Activated CD4-positive, alpha-beta memory T cell treated with anti-CD3 and anti-CD28 coated beads for 36 hours (primary cell): ENCODE measurements at regions of chr6 and their contacts with region 1.

Region 1: DNA sequence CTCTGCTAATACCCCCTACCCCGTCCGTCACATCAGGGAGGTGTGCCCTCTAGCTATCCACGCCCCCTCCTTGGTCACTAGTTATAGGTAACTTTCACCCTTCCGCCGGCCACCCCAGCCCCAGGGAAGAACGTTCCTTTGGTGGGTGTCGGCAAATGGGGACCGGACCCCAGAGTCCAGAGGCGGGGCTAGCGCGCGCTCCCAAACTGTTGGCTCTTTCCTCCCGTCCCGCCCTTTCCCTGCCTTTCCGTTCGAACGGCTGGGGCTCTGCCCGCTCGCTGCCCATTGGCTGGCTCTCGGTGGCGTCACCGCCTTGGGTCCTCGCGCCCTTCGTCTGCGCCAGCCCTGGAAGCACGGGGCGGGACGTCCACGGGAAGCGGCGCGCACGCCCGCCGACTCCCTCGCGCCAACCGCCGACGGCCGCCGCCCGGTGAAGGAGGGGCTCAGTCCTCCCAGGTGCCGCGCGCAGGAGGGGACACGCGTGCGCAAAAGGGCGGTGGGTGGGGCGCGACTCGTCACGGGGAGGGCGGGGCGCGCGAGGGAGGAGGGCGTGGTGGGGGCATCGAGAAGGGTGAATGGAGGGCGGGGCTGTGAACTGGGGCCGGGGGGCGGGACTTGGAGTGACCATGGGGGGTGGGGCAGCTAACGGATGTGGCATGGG is 634 bp upstream of the PHF1 start:
- DNase-seq: peak; percentile 98
- H3K4me3 Mint-ChIP-seq: peak overlapping the region; percentile 84
- H3K27ac Mint-ChIP-seq: peak overlapping the region; percentile 91
- H3K4me1 Mint-ChIP-seq: peaks cover 45% of the 10 kb centered on the region
- H3K27me3 Mint-ChIP-seq: no peaks in the 10 kb centered on the region

Region 2: DNA sequence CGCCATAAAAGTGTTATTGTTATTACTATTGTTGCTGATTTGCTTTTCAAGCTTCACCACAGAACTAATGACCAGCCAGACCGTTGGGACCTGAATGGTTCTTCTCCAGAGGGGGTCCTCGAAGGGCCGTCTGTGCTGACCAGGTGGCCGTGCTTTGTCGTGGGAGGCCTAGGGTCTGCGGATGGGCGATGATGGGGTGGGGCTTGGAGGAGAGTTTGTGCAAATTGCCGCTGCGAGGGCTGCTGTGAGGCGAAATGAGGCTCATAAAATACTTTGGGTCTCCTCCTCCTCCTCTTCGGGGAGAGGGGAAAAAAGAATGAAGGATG is 86.6 kb before region 1 on chr6:
- CTCF ChIA-PET with region 1: interaction called, 3 read pairs
- POLR2A ChIA-PET with region 1: interaction called, 3 read pairs
- intact Hi-C with region 1: loop called (anchors 1 kb)
- DNase-seq: no peak
- H3K4me3 Mint-ChIP-seq: peak overlapping the region; percentile 89
- H3K27ac Mint-ChIP-seq: peak overlapping the region; percentile 98
- H3K4me1 Mint-ChIP-seq: peaks cover 47% of the 10 kb centered on the region
- H3K27me3 Mint-ChIP-seq: no peaks in the 10 kb centered on the region

Region 3: DNA sequence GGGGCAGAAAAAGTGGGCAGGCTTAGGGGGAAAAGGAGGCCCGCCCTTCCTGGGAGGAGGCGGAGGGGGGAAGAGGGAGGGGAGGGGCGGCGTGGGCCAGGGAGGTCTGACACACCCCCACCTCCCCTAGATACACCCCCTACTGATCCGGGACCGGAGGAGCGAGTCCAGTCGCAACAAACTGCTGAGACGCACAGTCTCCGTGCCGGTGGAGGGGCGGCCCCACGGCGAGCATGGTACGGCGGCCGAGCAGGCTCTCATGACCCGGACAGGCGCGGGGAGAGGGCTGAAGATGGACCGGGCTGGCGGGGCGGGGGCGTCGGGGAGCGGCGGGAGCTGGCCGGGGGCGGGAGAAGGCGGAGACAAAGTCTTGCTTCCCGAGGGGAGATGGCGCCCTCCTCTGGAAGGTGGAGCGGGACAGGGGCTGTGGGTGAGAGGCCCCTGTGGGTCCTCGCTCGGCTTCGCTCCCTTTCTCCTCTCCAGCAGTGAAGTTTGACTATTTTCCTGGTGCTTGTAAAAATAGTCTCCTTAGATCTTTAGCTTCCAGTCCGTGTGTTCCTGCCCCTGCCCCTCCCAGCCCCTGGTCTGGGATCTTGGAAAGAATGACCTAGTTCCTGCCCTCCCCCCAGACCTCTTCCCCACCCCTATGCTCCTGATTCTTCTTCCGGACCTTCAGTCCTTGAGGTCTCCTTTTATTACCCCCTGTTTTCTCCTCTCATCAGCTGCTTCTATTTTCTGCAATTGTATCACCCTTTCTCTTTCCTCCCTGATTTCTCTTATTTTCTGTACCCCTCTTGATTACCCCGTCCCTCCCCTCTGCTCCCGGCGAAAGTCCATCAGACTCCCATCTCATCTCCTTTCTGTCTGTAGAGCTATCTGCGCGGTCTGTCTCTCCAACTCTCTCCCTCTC is 15.7 kb after region 1 on chr6:
- CTCF ChIA-PET with region 1: interaction called, 6 read pairs
- POLR2A ChIA-PET with region 1: interaction called, 24 read pairs
- intact Hi-C with region 1: loop called (anchors 1 kb)
- DNase-seq: peak; percentile 93
- H3K4me3 Mint-ChIP-seq: peak overlapping the region; percentile 83
- H3K27ac Mint-ChIP-seq: peak overlapping the region; percentile 89
- H3K4me1 Mint-ChIP-seq: peaks cover 56% of the 10 kb centered on the region
- H3K27me3 Mint-ChIP-seq: no peaks in the 10 kb centered on the region

Region 4: DNA sequence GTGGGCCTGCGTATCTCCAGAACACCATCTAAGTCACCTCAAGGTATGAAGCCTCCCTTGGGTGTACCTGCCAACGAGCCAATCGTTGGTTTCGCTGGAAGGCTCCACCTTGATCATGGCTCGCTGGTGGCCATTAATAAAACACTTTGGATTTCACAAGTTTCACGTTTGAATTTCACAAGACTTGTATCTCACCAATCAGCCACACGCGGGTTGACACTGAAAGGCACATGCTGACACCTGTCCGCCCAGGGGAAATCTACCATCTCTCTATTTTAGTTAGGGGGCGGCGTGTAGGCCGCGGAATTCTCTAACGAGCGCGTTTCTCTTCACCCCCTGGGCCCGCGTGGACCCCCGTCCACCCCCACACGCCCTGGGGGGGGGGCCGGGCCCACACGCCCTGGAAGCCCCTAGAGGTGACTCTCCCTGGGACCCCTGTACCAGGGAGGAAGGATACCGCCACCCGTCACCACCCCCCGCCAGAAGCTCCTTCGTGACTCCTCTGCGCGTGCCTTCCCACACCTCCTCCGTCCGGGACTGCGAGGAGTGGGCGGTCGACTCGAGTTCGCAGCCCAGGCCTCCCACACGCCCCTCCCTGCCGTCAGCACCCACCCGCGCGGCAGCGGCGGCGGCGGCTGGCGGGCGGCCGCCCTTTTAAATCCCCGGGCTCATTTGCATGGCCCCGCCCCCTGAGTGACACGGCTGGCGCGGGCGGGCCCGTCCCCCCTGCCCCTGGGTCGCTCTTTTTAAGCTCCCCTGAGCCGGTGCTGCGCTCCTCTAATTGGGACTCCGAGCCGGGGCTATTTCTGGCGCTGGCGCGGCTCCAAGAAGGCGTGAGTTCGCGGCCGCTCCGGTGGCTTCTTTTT is 826.2 kb after region 1 on chr6 and contains the start of gene HMGA1:
- CTCF ChIA-PET with region 1: no interaction called
- POLR2A ChIA-PET with region 1: no interaction called
- intact Hi-C with region 1: loop called (anchors 5 kb)
- DNase-seq: peak; percentile 91
- H3K4me3 Mint-ChIP-seq: peak within 1 kb of the TSS; percentile 88
- H3K27ac Mint-ChIP-seq: peak within 1 kb of the TSS; percentile 93
- H3K4me1 Mint-ChIP-seq: peaks cover 41% of the 10 kb centered on the region
- H3K27me3 Mint-ChIP-seq: no peaks in the 10 kb centered on the region
- total RNA-seq, gene HMGA1: 422 to 429 TPM